ENCODE measurements at regions of chr22 and their contacts with region 1.

Region 1: GRCh38 chr22:44625981-44626687 is 75.9 kb upstream of the PRR5 start:
- DNase-seq: peak; percentile 70 to 81 (median 76)
- ATAC-seq: peak; percentile 88
- H3K4me3 ChIP-seq: no peak overlapping the region
- H3K27ac ChIP-seq: no peak overlapping the region
- H3K4me1 ChIP-seq: peaks cover 0 to 7% of the 10 kb centered on the region in 2 experiments; a peak in 2 of 5 replicates
- H3K27me3 ChIP-seq: peaks cover 0 to 12% of the 10 kb centered on the region in 2 experiments; a peak in 3 of 5 replicates
- CTCF ChIP-seq: peak; percentile 88 to 98 (median 96)
- EP300 ChIP-seq: no peak
- POLR2A ChIP-seq: no peak
- RAD21 ChIP-seq: peak; percentile 72 to 86

Region 2: DNA sequence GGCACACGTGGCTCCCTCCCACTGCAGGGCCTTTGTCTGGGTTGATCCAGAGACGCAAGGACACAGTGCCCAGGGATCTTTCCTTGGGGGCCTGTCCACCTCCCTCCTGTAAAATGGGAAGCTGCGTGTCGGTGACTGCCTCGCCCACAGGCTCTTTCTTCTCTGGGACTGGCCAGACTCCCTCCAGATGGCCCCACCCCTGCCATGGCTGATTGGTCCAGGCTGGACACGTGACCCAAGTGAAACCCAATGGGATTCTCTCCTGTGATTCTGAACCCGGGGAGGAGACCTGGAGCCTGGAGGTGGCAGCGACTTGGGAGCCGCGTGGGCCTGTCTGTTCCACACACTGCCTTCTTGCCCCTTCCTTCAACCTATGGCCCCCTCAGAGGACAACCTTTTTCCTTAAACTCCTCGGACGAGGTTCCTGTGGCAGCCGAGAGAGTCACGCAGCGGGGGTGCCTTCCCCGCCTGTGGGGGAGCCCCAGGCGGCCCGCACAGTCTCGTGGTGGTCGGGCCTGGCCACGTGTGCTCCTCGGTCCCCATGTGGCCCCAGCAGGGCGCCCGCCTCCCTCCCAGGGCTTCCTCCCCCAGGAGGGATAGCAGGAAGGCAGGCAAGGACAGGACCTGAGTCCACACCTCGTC is 1226.7 kb before region 1 on chr22:
- CTCF ChIA-PET with region 1: no interaction called
- POLR2A ChIA-PET with region 1: no interaction called
- in situ Hi-C with region 1: loop called (anchors 10 kb)
- intact Hi-C with region 1: no loop called
- DNase-seq: peak; percentile 40 to 80 (median 75)
- ATAC-seq: peak; percentile 87
- H3K4me3 ChIP-seq: no peak overlapping the region
- H3K27ac ChIP-seq: no peak overlapping the region
- H3K4me1 ChIP-seq: peaks cover 0 to 11% of the 10 kb centered on the region in 2 experiments; a peak in 2 of 5 replicates
- H3K27me3 ChIP-seq: peaks cover 0 to 4% of the 10 kb centered on the region in 2 experiments; a peak in 2 of 5 replicates
- CTCF ChIP-seq: no peak
- EP300 ChIP-seq: no peak
- POLR2A ChIP-seq: no peak
- RAD21 ChIP-seq: no peak

Region 3: GRCh38 chr22:43993027-43993760 is 632.9 kb before region 1 on chr22:
- CTCF ChIA-PET with region 1: interaction called, 3 read pairs
- POLR2A ChIA-PET with region 1: interaction called, 3 read pairs
- in situ Hi-C with region 1: no loop called
- intact Hi-C with region 1: loop called (anchors 10 kb)
- DNase-seq: peak; percentile 56 to 59 (median 57)
- ATAC-seq: peak; percentile 88
- H3K4me3 ChIP-seq: no peak overlapping the region
- H3K27ac ChIP-seq: no peak overlapping the region
- H3K4me1 ChIP-seq: peaks cover 0 to 7% of the 10 kb centered on the region in 2 experiments; a peak in 1 of 5 replicates
- H3K27me3 ChIP-seq: no peaks in the 10 kb centered on the region
- CTCF ChIP-seq: peak; percentile 73 to 87 (median 85)
- EP300 ChIP-seq: no peak
- POLR2A ChIP-seq: no peak
- RAD21 ChIP-seq: peak; percentile 70 to 80

Region 4: DNA sequence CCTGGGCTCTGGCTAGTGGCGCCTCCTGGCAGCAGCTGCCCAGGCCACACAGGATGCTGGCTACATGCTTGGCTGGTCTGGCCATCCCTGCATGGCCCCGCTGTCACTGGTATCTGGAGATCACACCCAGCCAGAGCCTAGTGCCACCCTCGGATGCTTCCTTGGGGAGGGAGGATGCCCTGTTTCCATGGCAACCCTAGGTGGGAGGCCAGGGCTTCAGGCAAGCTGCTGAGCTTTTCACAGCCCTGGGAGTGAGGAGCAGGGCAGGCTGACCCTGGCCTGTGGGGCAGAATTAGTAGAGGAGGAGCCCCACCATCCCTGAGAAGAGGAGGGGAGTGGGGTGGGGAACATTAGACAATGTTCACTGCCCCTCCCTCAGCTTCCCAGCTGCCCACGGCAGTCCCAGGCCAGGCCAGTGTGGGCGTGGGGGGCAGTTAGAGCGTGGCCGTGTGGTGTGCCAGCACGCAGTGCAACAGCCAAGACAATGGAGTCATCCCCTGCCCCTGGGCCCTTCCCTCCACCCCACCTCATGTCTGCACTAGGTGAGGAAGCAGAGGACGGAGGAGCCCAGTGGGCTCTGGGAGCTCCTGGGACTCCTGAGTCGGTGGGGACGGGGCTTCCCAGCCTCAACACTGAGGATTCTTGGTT is 551.7 kb before region 1 on chr22:
- CTCF ChIA-PET with region 1: no interaction called
- POLR2A ChIA-PET with region 1: no interaction called
- in situ Hi-C with region 1: loop called (anchors 10 kb)
- intact Hi-C with region 1: no loop called
- DNase-seq: no peak
- ATAC-seq: no peak
- H3K4me3 ChIP-seq: no peak overlapping the region
- H3K27ac ChIP-seq: no peak overlapping the region
- H3K4me1 ChIP-seq: peaks cover 0 to 12% of the 10 kb centered on the region in 2 experiments; a peak in 3 of 5 replicates
- H3K27me3 ChIP-seq: no peaks in the 10 kb centered on the region
- CTCF ChIP-seq: no peak
- EP300 ChIP-seq: no peak
- POLR2A ChIP-seq: no peak
- RAD21 ChIP-seq: no peak

Region 5: GRCh38 chr22:44231233-44231632 is 394.9 kb before region 1 on chr22:
- CTCF ChIA-PET with region 1: no interaction called
- POLR2A ChIA-PET with region 1: no interaction called
- in situ Hi-C with region 1: no loop called
- intact Hi-C with region 1: no loop called
- DNase-seq: no peak
- ATAC-seq: no peak
- H3K4me3 ChIP-seq: no peak overlapping the region
- H3K27ac ChIP-seq: no peak overlapping the region
- H3K4me1 ChIP-seq: no peaks in the 10 kb centered on the region
- H3K27me3 ChIP-seq: no peaks in the 10 kb centered on the region
- CTCF ChIP-seq: no peak
- EP300 ChIP-seq: no peak
- POLR2A ChIP-seq: no peak
- RAD21 ChIP-seq: no peak

Region 6: GRCh38 chr22:44413211-44413610 is 212.9 kb before region 1 on chr22:
- CTCF ChIA-PET with region 1: no interaction called
- POLR2A ChIA-PET with region 1: no interaction called
- in situ Hi-C with region 1: no loop called
- intact Hi-C with region 1: no loop called
- DNase-seq: no peak
- ATAC-seq: no peak
- H3K4me3 ChIP-seq: no peak overlapping the region
- H3K27ac ChIP-seq: no peak overlapping the region
- H3K4me1 ChIP-seq: no peaks in the 10 kb centered on the region
- H3K27me3 ChIP-seq: peaks cover 4 to 30% of the 10 kb centered on the region in 2 experiments; a peak in 4 of 5 replicates
- CTCF ChIP-seq: no peak
- EP300 ChIP-seq: no peak
- POLR2A ChIP-seq: no peak
- RAD21 ChIP-seq: no peak